PC-9 (cell line): ENCODE measurements at regions of chr1 and their contacts with region 1.

Region 1: GRCh38 chr1:214281021-214281719 is at the start of gene SMYD2:
- DNase-seq: peak; percentile 51 to 75
- H3K4me3 ChIP-seq: peak within 1 kb of the TSS; percentile 81
- H3K27ac ChIP-seq: peak within 1 kb of the TSS; percentile 71
- H3K4me1 ChIP-seq: peaks cover 33% of the 10 kb centered on the region
- H3K27me3 ChIP-seq: no peaks in the 10 kb centered on the region
- CTCF ChIP-seq: no peak
- total RNA-seq, gene SMYD2: 36.4 and 41.2 TPM in 2 replicates

Region 2: DNA sequence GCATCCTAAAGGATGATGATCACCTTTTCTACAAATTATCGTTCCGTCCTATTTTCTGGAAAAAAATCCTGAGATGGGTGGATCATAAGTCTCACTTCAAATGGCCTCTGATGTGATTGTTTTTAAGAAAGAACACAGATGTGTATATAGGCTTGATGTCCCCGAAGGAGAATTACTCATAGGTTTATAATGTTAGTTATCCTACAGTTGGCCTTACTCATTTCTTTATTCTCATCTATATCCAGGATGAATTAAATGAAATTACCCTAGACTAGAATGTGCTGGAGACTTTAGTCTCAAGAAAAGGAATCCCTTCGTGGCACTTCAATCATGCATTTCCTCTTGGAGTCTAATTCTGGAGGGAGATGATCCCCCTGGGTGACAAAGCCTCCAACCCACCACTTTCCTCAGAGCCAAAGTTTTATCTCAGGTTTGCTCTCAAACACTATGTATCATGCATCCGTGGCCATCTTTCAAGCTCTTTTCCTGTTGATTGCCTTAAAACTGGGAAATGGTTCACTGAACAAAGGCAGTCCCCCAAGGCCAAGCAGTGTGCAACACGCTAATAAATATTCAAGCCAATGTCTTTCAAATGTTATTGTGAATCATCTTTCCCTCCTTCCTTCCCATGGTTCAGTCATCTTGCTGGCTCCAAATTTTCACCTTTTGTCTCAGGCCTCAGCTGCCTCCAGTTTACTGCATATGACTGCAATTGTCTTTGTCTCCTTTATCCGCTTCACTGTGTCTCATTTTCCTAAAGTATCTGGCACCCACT is 32.7 kb before region 1 on chr1:
- CTCF ChIA-PET with region 1: no interaction called
- POLR2A ChIA-PET with region 1: interaction called, 16 read pairs
- intact Hi-C with region 1: no loop called
- DNase-seq: no peak
- H3K4me3 ChIP-seq: no peak overlapping the region
- H3K27ac ChIP-seq: no peak overlapping the region
- H3K4me1 ChIP-seq: no peaks in the 10 kb centered on the region
- H3K27me3 ChIP-seq: no peaks in the 10 kb centered on the region
- CTCF ChIP-seq: no peak

Region 3: GRCh38 chr1:214296860-214297745 is 15.9 kb after region 1 on chr1:
- CTCF ChIA-PET with region 1: no interaction called
- POLR2A ChIA-PET with region 1: no interaction called
- intact Hi-C with region 1: loop called (anchors 1 kb)
- DNase-seq: peak; percentile 45 to 94
- H3K4me3 ChIP-seq: no peak overlapping the region
- H3K27ac ChIP-seq: peak overlapping the region; percentile 65
- H3K4me1 ChIP-seq: peaks cover 33% of the 10 kb centered on the region
- H3K27me3 ChIP-seq: no peaks in the 10 kb centered on the region
- CTCF ChIP-seq: no peak

Region 4: DNA sequence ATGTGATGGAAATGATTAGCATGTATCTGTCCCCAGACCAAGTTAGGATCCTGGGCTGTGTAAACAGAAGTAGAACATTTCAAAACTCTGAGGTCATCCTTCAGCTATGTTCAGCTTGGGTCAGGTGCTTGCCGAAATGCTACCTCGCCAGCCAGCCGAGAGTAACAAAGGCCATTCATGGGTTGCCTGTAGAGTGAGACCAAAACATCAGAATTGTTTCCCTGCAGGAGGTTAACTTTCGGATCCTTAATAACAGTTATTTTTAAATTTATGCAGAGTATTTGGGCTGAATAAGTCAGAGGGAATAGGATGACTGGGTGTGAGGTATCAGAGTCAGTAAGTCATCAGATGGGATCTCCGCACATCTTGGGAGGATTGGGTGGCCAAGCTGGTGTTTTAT is 35.4 kb after region 1 on chr1:
- CTCF ChIA-PET with region 1: no interaction called
- POLR2A ChIA-PET with region 1: no interaction called
- intact Hi-C with region 1: loop called (anchors 5 kb)
- DNase-seq: peak; percentile 23 to 43
- H3K4me3 ChIP-seq: no peak overlapping the region
- H3K27ac ChIP-seq: no peak overlapping the region
- H3K4me1 ChIP-seq: no peaks in the 10 kb centered on the region
- H3K27me3 ChIP-seq: no peaks in the 10 kb centered on the region
- CTCF ChIP-seq: no peak

Region 5: DNA sequence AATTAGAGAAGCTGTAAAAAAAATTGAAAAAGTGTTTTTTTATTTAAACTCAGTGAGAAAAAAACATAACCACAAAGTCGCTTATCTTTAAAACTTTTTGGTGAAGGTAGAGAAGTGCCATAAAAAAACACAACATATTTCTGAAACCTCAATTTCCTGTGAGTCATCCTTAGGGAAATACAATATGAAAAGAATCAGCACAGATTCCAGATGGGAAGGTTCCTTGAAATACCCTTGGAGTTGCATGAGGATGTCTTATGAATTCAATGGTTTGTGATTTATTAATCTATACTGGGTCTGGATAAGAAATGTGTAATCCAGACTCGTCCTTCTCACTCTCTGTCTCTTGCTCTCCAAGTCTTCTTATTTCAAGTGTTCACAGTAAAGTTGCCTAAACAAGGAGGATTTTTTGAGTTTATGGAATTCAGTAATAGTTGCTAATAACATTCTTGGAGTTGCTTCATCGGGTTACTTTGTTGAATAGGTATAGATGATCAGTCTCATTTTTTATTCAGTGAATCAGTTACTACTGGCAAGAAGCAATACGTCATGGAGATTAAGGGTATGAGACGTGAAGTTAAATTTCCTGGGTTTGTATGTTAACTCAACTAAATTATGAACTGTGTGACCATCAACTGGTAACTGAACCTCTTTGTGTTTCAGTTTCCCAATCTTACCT is 992.8 kb after region 1 on chr1:
- CTCF ChIA-PET with region 1: no interaction called
- POLR2A ChIA-PET with region 1: interaction called, 21 read pairs
- intact Hi-C with region 1: no loop called
- DNase-seq: peak in 1 of 2 experiments; percentile 48
- H3K4me3 ChIP-seq: no peak overlapping the region
- H3K27ac ChIP-seq: no peak overlapping the region
- H3K4me1 ChIP-seq: peaks cover 12% of the 10 kb centered on the region
- H3K27me3 ChIP-seq: no peaks in the 10 kb centered on the region
- CTCF ChIP-seq: no peak